Activated CD8-positive, alpha-beta T cell treated with anti-CD3 and anti-CD28 coated beads for 36 hours (primary cell): ENCODE measurements at regions of chr14 and their contacts with region 1.

Region 1: DNA sequence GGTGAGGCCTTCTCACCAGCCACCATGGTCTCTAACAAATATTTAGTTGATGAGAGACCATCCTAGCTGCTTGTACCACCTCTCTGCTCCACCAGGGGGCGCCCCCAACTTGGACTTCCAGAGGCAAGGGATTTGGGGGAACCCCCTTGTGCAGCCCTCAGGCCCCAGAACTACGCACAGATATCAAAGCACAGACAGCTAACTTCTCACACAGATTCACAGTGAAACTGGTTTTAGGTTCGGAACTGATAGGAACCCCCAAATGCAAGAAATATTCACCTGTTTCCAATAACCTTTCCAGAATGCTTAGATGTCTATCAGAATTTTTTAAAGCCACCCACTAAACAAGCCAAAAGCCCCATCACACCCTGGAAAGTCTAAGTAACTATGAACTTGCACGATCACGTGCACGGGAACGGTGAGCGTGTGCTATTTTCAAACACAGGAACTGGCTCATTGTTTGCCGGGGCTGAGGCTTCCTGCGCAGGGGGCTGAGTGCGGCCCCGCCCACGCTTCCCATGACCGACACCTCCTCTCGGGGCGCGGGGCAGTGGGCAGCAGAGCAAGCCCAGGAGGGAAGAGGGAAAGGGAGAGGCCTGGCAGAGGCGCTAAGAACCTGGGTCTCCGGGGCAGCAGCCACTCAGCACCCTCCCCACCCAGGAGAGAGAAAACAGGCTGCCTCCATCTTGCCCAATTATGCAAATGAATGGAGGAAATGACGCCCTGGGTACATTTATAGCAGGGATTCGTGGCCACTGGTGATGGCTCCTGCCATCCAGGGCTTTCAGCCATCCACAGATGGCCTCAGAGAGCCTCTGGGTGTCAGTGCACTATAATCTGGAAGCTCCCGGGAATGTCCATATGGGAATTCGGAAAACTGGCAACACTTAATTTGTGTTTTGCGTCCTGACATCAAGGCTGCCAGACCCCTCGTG is 79.4 kb upstream of the GPR68 start:
- DNase-seq: peak; percentile 99
- ATAC-seq: peak; percentile 80
- H3K4me3 Mint-ChIP-seq: peak overlapping the region; percentile 79
- H3K27ac Mint-ChIP-seq: peak overlapping the region; percentile 100
- H3K4me1 Mint-ChIP-seq: peaks cover 86% of the 10 kb centered on the region
- H3K27me3 Mint-ChIP-seq: no peaks in the 10 kb centered on the region
- CTCF ChIP-seq: peak; percentile 95

Region 2: DNA sequence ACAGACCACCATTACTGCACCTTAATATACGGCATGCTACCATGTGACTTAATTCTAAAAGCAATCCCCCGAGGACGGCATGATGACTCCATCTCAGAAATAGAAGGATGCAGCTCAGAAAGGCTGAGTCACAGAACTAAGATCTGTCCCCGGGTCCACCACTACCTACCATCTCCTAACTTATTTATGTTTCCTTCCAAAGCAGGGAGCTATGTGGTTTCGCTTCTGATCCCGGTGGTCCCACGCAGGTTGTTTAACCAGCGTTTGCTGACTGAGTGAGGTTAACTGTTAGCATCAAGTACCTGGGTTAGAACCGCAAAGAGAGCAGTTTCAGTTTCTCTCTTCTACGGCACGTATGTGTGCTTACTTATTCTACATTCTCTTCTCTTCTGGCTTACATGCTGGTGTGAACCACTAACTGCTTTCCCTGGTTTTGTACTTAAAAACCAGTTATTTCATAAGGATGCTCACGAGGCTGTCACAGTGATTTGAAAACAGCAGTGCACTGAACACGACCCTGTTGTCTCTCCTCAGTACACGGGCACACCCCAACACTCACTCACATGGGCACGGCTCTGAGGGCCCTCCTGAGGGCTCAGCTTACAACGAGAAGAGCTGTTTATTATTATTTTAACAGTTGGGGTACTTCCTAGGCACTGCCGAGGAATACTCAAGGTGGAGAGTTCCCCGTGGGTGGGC is 27.0 kb after region 1 on chr14:
- CTCF ChIA-PET with region 1: interaction called, 183 read pairs
- POLR2A ChIA-PET with region 1: interaction called, 38 read pairs
- intact Hi-C with region 1: loop called (anchors 1 kb)
- DNase-seq: peak; percentile 90
- ATAC-seq: peak; percentile 59
- H3K4me3 Mint-ChIP-seq: peak overlapping the region; percentile 65
- H3K27ac Mint-ChIP-seq: peak overlapping the region; percentile 85
- H3K4me1 Mint-ChIP-seq: peaks cover 95% of the 10 kb centered on the region
- H3K27me3 Mint-ChIP-seq: no peaks in the 10 kb centered on the region
- CTCF ChIP-seq: no peak

Region 3: GRCh38 chr14:91373591-91374254 is 49.8 kb after region 1 on chr14:
- CTCF ChIA-PET with region 1: interaction called, 25 read pairs
- POLR2A ChIA-PET with region 1: interaction called, 22 read pairs
- intact Hi-C with region 1: loop called (anchors 5 kb)
- DNase-seq: peak; percentile 84
- ATAC-seq: peak; percentile 53
- H3K4me3 Mint-ChIP-seq: peak overlapping the region; percentile 49
- H3K27ac Mint-ChIP-seq: peak overlapping the region; percentile 90
- H3K4me1 Mint-ChIP-seq: peaks cover 98% of the 10 kb centered on the region
- H3K27me3 Mint-ChIP-seq: no peaks in the 10 kb centered on the region
- CTCF ChIP-seq: no peak

Region 4: GRCh38 chr14:91396959-91397815 is 73.2 kb after region 1 on chr14:
- CTCF ChIA-PET with region 1: interaction called, 36 read pairs
- POLR2A ChIA-PET with region 1: interaction called, 9 read pairs
- intact Hi-C with region 1: no loop called
- DNase-seq: peak; percentile 80
- ATAC-seq: peak; percentile 73
- H3K4me3 Mint-ChIP-seq: peak overlapping the region; percentile 70
- H3K27ac Mint-ChIP-seq: peak overlapping the region; percentile 95
- H3K4me1 Mint-ChIP-seq: peaks cover 89% of the 10 kb centered on the region
- H3K27me3 Mint-ChIP-seq: no peaks in the 10 kb centered on the region
- CTCF ChIP-seq: no peak

Region 5: GRCh38 chr14:91424813-91425530 is 101.0 kb after region 1 on chr14:
- CTCF ChIA-PET with region 1: interaction called, 155 read pairs
- POLR2A ChIA-PET with region 1: interaction called, 137 read pairs
- intact Hi-C with region 1: no loop called
- DNase-seq: no peak
- ATAC-seq: no peak
- H3K4me3 Mint-ChIP-seq: no peak overlapping the region
- H3K27ac Mint-ChIP-seq: no peak overlapping the region
- H3K4me1 Mint-ChIP-seq: peaks cover 18% of the 10 kb centered on the region
- H3K27me3 Mint-ChIP-seq: no peaks in the 10 kb centered on the region
- CTCF ChIP-seq: no peak